ENCODE measurements at regions of chr15 and their contacts with region 1.

Region 1: GRCh38 chr15:55494931-55495330 is 13.1 kb downstream of the DNAAF4 start:
- DNase-seq: no peak
- H3K4me3 ChIP-seq: no peak overlapping the region
- H3K27ac ChIP-seq: no peak overlapping the region
- H3K4me1 ChIP-seq: peaks cover 5 to 13% (median 11%) of the 10 kb centered on the region in 4 donors
- H3K27me3 ChIP-seq: no peaks in the 10 kb centered on the region
- CTCF ChIP-seq: no peak
- EP300 ChIP-seq: no peak
- POLR2A ChIP-seq: no peak

Region 2: DNA sequence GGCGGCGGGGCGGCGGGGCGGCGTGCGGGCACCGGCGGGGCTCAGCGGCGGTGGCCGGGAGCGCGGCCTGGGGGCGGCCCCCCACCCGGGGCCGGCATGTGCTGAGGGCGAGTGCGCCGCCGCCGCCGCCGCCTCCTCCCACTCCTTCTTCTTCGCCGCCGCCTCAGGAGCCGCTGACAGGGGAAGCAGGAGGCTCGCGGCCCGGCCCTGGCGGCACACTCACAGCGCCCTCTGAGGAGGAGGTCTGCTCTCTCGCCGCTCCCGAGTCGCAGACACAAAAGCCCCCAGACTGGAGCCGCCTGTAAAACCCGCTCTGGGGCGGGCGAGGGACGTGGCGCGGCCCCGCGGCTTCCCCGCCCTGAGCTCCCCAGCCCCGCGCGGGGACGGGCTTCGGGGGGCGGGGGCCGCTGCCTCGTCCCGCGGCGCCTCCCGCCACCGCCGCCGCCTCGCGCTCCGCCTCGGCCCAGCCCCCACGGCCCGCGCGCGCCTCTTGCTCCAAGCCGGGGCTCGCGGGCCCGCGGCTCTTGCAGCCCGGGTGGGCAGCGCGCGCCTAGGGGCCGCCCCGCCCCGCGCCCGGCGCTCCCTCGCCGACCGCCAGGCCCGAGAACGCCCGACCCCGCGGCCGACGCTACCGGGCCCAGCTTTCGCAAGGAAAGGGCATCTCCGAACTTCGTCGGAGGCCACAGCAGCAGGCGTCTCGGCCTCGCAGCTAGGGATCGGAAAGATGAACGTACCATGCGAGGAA is 93.3 kb after region 1 on chr15 and contains the start of gene PYGO1:
- intact Hi-C with region 1: loop called (anchors 5 kb)
- DNase-seq: no peak
- H3K4me3 ChIP-seq: peak within 1 kb of the TSS; percentile 75 to 78 (median 76)
- H3K27ac ChIP-seq: peak within 1 kb of the TSS; percentile 90 to 93 (median 91)
- H3K4me1 ChIP-seq: peaks cover 7 to 37% (median 31%) of the 10 kb centered on the region in 4 donors
- H3K27me3 ChIP-seq: no peaks in the 10 kb centered on the region
- CTCF ChIP-seq: no peak
- EP300 ChIP-seq: no peak
- POLR2A ChIP-seq: no peak
- total RNA-seq, gene PYGO1: 13.6 to 20.7 (median 16.7) TPM